Posterior cingulate gyrus (tissue), 11 donors: ENCODE measurements at regions of chr5 and their contacts with region 1.

Region 1: DNA sequence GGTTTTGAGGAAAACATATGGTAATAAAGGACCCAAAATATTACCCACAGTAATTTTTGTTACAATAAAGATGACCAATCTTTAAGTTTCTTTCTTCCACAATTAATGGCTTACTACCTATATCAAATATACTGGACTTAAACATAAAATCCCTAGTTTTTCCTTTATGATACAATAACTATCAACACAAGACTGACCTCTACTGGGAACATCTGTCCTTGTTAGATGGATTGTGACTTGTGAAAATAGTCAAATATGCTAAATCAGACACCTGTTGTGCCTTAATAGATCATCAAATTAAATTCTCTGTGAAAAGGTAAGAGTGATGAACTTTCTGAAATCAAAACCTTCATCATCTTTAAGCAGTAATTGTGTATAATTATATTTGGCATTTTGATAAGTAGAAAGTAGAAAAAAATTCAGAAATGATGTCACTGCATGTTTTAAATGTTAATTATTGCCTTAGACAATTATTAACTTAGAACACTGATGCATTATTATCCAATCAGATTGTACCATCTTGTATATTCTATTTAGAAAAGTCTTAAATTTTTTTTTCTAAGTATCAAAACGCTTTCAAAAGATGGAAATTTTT is 113.6 kb downstream of the DEPDC1B start:
- DNase-seq: no peak

Region 2: DNA sequence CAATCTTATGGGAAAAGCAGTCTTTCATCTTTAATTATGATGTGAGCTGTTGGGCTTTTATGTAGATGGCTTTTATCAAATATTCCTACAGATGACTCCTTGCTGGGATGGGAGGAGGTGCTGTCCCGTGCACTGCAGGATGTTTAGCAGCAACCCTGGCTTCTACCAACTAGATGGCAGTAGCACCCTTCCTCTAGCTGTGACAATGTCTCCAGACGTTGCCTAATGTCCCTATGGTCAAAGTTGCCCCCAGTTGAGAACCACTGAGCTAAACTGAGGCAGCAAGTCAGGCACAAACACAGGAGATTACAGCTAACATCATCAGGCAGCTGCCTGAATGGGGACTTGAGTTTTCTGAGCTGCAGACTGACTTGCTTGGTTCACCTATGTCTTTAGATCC is 291.0 kb before region 1 on chr5:
- intact Hi-C with region 1: loop called (anchors 5 kb)
- DNase-seq: peak in 4 of 10 donors; percentile 15 to 61 (median 25)

Region 3: GRCh38 chr5:60382716-60383115 is 203.7 kb before region 1 on chr5:
- intact Hi-C with region 1: loop called (anchors 10 kb)
- DNase-seq: no peak

Region 4: GRCh38 chr5:60677844-60678664 is 91.7 kb after region 1 on chr5:
- intact Hi-C with region 1: no loop called
- DNase-seq: no peak